Activated CD4-positive, alpha-beta T cell treated with anti-CD3 and anti-CD28 coated beads for 36 hours (primary cell): ENCODE measurements at regions of chr19 and their contacts with region 1.

Region 1: DNA sequence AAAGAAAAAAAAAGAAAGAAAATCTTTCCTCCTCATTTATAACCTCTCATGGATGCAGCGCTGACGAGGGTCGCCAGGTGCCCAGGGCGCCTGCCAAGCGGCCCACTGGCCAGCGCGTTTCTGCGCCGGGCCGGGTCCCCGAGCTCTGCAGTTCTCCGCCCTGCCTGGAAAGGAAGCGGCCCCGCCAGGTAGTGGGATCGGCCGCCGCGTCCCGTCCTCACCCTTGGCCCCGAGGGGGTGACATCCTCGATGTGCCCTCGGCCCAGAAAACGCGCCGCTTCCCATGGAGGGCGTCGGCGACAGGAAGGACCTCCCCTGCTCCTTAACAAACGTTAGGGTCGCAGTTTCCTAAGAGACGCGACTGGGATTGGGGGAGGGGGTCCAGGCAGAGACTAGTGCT is 56.9 kb downstream of the ZNF726 start:
- DNase-seq: peak; percentile 11
- ATAC-seq: no peak
- H3K4me3 Mint-ChIP-seq: no peak overlapping the region
- H3K27ac Mint-ChIP-seq: no peak overlapping the region
- H3K4me1 Mint-ChIP-seq: peaks cover 4% of the 10 kb centered on the region
- H3K27me3 Mint-ChIP-seq: peaks cover 40% of the 10 kb centered on the region

Region 2: GRCh38 chr19:23876261-23876660 is 95.3 kb before region 1 on chr19:
- CTCF ChIA-PET with region 1: no interaction called
- POLR2A ChIA-PET with region 1: no interaction called
- intact Hi-C with region 1: loop called in 1 of 2 experiments (anchors 2 kb)
- DNase-seq: no peak
- ATAC-seq: no peak
- H3K4me3 Mint-ChIP-seq: no peak overlapping the region
- H3K27ac Mint-ChIP-seq: no peak overlapping the region
- H3K4me1 Mint-ChIP-seq: no peaks in the 10 kb centered on the region
- H3K27me3 Mint-ChIP-seq: peaks cover 20% of the 10 kb centered on the region

Region 3: DNA sequence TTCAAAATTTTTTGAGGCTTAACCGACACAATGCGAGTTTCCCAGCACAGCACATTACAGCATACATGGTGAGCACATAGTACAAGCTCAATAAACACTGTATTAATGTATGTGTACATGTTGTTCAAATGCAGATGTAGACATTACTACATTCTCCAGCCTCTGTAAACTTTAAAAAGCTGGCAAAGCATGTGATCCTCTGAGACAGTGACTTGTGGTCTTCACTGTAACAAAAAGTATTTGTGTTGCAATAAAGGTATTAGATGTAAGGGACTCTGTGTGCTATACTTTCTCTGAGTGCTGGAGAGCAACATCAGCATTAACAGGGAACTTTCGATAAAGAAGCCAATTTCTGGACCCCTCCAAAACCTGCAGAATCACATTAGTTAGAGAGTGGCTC is 69.0 kb after region 1 on chr19:
- CTCF ChIA-PET with region 1: no interaction called
- POLR2A ChIA-PET with region 1: no interaction called
- intact Hi-C with region 1: no loop called
- DNase-seq: no peak
- ATAC-seq: no peak
- H3K4me3 Mint-ChIP-seq: no peak overlapping the region
- H3K27ac Mint-ChIP-seq: no peak overlapping the region
- H3K4me1 Mint-ChIP-seq: peaks cover 22% of the 10 kb centered on the region
- H3K27me3 Mint-ChIP-seq: no peaks in the 10 kb centered on the region

Region 4: DNA sequence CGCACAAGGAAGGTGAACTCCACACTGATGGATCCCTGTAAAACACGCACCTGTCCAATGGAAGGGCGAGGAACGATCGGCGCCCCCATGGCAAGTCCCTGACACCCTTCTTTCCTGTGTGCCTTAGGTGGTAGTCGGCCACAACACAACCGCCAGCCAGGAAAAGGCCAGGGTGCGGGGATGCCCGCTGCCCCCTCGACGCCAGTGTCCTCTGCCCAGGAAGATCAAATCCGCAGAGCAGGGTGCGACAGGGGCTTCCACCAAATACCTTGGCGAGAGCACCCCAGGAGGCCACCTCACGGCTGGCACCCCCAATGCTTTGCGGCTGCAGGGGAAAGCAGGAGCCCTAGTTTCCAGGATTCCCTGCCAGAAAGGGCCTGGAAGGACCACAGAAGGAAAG is 206.6 kb after region 1 on chr19:
- CTCF ChIA-PET with region 1: no interaction called
- POLR2A ChIA-PET with region 1: no interaction called
- intact Hi-C with region 1: loop called in 1 of 2 experiments (anchors 5 kb)
- DNase-seq: no peak
- ATAC-seq: no peak
- H3K4me3 Mint-ChIP-seq: no peak overlapping the region
- H3K27ac Mint-ChIP-seq: no peak overlapping the region
- H3K4me1 Mint-ChIP-seq: no peaks in the 10 kb centered on the region
- H3K27me3 Mint-ChIP-seq: no peaks in the 10 kb centered on the region